CD4-positive, alpha-beta memory T cell (primary cell): ENCODE measurements at regions of chr5 and their contacts with region 1.

Region 1: GRCh38 chr5:55959208-55959607 is 35.6 kb downstream of the IL6ST start:
- DNase-seq: peak in 1 of 5 donors; percentile 9
- H3K4me3 ChIP-seq: no peak overlapping the region
- H3K4me3 Mint-ChIP-seq: no peak overlapping the region
- H3K27ac ChIP-seq: no peak overlapping the region
- H3K27ac Mint-ChIP-seq: peak overlapping the region in 6 of 7 donors; percentile 30 to 81 (median 44)
- H3K4me1 ChIP-seq: no peaks in the 10 kb centered on the region
- H3K4me1 Mint-ChIP-seq: peaks cover 5 to 10% (median 7%) of the 10 kb centered on the region in 4 donors
- H3K27me3 ChIP-seq: no peaks in the 10 kb centered on the region
- H3K27me3 Mint-ChIP-seq: no peaks in the 10 kb centered on the region

Region 2: DNA sequence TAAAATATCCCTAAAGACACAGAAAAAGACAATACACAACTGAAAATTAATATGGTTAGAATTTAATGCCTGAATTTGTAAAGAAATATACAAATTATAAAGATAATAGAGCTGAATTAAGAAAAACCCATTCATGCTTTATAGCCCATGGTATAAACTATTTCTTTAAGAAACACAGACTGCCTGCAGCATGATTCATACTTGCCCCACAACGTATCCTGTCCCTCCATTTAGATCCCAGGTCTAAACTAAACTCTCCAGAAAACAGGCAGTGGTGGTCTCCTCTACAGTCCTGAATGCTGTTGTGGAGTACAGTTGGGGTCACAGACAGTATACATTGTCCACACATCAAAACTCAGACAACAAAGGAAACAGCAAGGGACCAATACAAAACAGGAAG is 10.7 kb after region 1 on chr5:
- CTCF ChIA-PET with region 1: interaction called, 4 read pairs
- POLR2A ChIA-PET with region 1: interaction called, 5 read pairs
- intact Hi-C with region 1: loop called (anchors 2 kb)
- DNase-seq: no peak
- H3K4me3 ChIP-seq: no peak overlapping the region
- H3K4me3 Mint-ChIP-seq: peak overlapping the region in 4 of 8 donors; percentile 8 to 62 (median 24)
- H3K27ac ChIP-seq: no peak overlapping the region
- H3K27ac Mint-ChIP-seq: peak overlapping the region in 5 of 7 donors; percentile 5 to 90 (median 37)
- H3K4me1 ChIP-seq: peaks cover 35% of the 10 kb centered on the region
- H3K4me1 Mint-ChIP-seq: peaks cover 30 to 57% (median 36%) of the 10 kb centered on the region in 4 donors
- H3K27me3 ChIP-seq: no peaks in the 10 kb centered on the region
- H3K27me3 Mint-ChIP-seq: no peaks in the 10 kb centered on the region

Region 3: DNA sequence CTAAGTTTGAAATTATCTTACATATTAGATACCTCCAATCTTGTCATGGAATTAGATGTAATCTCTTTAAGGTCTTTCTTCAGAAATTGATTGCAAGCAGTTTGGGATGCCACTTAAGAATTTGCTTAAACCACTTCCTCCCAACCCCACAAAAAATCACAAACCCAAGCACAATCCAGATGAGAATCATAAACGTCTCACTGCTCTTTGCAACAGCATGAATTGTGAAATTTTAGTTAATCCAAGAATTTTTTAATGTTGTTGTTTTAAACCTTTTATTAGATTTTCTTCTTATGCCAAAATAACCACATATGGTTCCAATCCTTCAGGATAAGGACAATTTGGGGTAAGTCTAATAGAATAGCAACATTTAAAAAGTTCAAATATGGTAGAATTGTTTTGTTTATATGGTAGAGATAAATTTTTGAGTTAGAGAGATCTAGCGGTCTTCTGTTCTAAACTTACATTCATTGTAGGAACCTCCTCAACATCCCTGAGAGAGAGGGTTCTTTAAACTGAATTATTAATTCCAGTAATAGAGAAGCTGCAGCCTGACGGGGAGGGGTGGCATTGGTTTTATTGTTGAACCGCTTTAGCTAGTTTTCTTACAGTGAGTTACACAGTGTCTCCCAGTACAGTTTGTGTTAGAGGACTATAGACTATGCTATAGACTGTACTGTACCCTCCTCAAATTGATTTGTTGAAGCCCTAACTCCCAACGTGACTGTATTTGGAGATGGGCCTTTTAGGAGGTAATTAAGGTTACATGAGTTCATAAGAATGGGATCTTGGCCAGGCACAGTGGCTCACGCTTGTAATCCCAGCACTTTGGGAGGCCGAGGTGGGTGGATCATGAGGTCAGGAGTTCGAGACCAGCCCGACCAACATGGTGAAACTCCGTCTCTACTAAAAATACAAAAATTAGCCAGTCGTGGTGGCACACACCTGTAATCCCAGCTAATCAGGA is 60.4 kb after region 1 on chr5:
- CTCF ChIA-PET with region 1: no interaction called
- POLR2A ChIA-PET with region 1: no interaction called
- intact Hi-C with region 1: no loop called
- DNase-seq: peak in 1 of 5 donors; percentile 9
- H3K4me3 ChIP-seq: no peak overlapping the region
- H3K4me3 Mint-ChIP-seq: peak overlapping the region in 6 of 8 donors; percentile 10 to 59 (median 45)
- H3K27ac ChIP-seq: no peak overlapping the region
- H3K27ac Mint-ChIP-seq: peak overlapping the region in 5 of 7 donors; percentile 6 to 65 (median 20)
- H3K4me1 ChIP-seq: peaks cover 20% of the 10 kb centered on the region
- H3K4me1 Mint-ChIP-seq: peaks cover 10 to 14% (median 12%) of the 10 kb centered on the region in 4 donors
- H3K27me3 ChIP-seq: no peaks in the 10 kb centered on the region
- H3K27me3 Mint-ChIP-seq: no peaks in the 10 kb centered on the region